ENCODE measurements at regions of chr2 and their contacts with region 1.

Region 1: DNA sequence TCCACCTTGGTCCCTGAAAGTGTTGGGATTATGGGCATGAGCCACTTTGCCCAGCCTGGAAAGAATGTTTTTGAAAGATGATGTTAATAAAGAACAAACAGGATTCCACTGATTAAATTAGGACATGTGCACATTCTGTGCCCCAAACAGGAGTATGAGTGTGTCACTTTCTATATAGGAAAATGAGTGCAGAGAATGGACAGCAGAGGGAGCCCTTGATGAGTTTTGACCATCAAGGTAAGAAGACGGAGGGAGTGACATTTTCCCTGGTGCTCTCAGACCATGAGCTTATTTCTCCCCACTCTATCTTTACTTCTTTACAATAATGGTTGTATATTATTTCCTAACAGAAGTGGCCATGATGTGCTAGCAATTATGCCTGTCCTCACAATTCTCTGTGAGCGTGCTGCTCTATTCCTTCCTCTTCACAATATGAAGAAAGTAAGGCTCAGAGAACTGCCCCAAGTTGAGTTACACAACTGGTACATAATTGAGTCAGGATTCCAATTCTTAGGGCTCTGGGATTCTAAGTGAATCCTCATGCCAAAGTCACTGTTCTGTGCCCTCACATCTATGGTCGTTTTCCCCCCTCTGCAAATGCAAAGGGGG is 20.6 kb downstream of the RPL37A start:
- DNase-seq: peak; percentile 89
- H3K4me3 Mint-ChIP-seq: no peak overlapping the region
- H3K27ac Mint-ChIP-seq: no peak overlapping the region
- H3K4me1 Mint-ChIP-seq: peaks cover 2% of the 10 kb centered on the region
- H3K27me3 Mint-ChIP-seq: no peaks in the 10 kb centered on the region

Region 2: DNA sequence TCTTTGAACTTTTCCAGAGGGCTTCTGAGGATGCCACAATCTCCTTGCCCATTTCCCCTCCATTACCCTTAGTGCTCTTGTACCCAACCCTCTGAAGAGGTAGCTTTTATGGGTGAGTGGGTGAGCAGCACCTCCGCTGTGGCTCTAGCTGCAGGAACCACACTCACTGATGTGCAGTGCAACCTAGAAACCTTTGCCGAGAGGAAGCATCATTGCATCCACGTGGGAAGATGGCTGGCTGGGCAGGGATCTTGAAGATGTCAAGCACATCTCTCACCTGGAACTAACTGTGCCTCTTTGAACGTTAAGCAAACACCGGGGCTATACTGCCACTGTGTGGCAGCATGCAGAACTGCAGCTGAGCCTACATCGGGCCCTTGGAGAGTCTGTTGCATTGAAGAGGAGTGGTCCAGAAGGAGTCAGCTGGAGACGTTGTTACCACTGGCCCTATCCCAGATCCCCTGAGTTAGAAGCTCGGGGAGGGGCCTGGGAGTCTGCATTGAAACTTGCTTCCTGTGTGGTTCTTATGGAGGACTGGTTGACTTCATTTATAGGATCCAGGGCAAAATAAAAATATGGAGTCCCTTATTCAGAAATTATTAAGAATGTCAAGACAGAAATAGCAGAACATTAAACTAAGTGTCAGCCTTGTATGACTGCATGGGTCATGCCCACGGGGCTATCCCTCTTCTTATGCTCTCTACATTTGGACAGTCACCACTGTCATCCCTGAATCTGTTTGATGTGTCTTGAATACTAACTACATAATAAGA is 147.4 kb after region 1 on chr2:
- intact Hi-C with region 1: loop called (anchors 1 kb)
- DNase-seq: peak; percentile 92
- H3K4me3 Mint-ChIP-seq: no peak overlapping the region
- H3K27ac Mint-ChIP-seq: no peak overlapping the region
- H3K4me1 Mint-ChIP-seq: peaks cover 2% of the 10 kb centered on the region
- H3K27me3 Mint-ChIP-seq: peaks cover 9% of the 10 kb centered on the region

Measured in activated CD4-positive, alpha-beta T cell treated with anti-CD3 and anti-CD28 coated beads, Interleukin-2, amount 10 ng/mL, durations not matched to agents 24 days and 14 days (primary cell).